ENCODE measurements at regions of chr12 and their contacts with region 1.

Region 1: DNA sequence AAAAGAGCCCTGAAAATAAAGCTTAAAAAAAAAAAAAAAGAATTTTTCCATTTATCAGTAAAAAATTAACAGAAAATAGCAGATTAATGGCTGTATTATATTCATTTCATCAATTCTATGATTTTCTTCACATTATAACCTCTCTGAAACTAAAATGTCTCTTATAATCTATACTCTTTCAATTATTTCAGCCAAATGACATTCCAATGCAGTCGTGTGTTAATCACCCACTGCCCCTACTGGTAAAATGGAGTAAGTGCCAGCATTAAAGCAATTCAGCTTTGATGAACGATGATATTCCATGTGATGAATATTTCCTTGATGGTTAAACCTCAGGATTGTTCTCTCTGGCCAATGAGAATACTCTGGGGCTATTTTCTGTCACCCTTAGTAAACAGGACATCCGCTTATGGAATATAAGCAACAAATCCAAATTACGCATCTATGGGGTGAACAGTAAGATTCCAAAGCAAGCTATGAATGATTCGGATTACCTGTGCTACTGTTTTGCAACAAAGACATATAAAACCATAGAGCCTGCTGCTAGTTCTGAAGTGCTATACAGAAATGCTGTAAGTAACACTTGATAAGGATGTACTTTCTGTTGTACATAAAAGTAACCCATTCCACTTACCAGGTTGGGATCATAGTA is 20.3 kb upstream of the SYCP3 start:
- DNase-seq: no peak
- ATAC-seq: peak; percentile 80
- H3K4me3 ChIP-seq: no peak overlapping the region
- H3K27ac ChIP-seq: no peak overlapping the region
- H3K4me1 ChIP-seq: no peaks in the 10 kb centered on the region
- H3K27me3 ChIP-seq: no peaks in the 10 kb centered on the region
- CTCF ChIP-seq: peak; percentile 68 to 83 (median 76)
- EP300 ChIP-seq: no peak
- POLR2A ChIP-seq: no peak
- RAD21 ChIP-seq: peak; percentile 87

Region 2: DNA sequence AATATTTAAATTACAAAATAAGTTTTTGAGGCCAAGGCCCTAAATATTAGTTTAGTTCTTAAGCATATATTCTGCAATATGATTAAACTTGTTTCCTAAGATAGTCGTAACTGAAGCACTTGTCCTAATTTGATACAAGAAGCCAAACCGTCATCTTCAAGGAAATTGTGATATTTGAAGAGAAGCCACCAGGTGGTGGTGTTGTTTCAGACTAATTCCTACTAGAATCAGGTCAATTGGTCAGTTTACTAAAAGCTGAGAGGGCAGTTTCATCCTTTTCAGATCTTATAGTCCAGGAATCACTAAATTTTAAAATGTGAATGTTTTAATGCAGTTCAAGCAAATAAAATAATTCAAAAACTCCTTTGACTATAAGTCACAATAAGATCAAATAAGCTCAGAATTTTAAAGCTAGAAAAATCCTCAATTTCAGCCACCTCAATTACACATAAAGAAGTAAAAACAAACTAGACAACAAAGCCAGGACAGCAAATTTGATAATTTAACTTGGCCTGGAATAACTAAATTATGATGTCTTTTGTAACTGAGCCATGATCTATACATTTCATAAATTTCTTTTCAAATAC is 344.9 kb before region 1 on chr12:
- CTCF ChIA-PET with region 1: interaction called, 17 read pairs
- POLR2A ChIA-PET with region 1: no interaction called
- RAD21 ChIA-PET with region 1: interaction called, 10 read pairs
- SMC1A ChIA-PET with region 1: interaction called, 12 read pairs
- in situ Hi-C with region 1: loop called (anchors 5 kb)
- intact Hi-C with region 1: loop called (anchors 2 kb)
- DNase-seq: peak; percentile 13
- ATAC-seq: peak; percentile 81
- H3K4me3 ChIP-seq: no peak overlapping the region
- H3K27ac ChIP-seq: no peak overlapping the region
- H3K4me1 ChIP-seq: no peaks in the 10 kb centered on the region
- H3K27me3 ChIP-seq: no peaks in the 10 kb centered on the region
- CTCF ChIP-seq: peak; percentile 48 to 66 (median 51); a peak in 5 of 6 replicates
- EP300 ChIP-seq: no peak
- POLR2A ChIP-seq: no peak
- RAD21 ChIP-seq: peak; percentile 87

Region 3: DNA sequence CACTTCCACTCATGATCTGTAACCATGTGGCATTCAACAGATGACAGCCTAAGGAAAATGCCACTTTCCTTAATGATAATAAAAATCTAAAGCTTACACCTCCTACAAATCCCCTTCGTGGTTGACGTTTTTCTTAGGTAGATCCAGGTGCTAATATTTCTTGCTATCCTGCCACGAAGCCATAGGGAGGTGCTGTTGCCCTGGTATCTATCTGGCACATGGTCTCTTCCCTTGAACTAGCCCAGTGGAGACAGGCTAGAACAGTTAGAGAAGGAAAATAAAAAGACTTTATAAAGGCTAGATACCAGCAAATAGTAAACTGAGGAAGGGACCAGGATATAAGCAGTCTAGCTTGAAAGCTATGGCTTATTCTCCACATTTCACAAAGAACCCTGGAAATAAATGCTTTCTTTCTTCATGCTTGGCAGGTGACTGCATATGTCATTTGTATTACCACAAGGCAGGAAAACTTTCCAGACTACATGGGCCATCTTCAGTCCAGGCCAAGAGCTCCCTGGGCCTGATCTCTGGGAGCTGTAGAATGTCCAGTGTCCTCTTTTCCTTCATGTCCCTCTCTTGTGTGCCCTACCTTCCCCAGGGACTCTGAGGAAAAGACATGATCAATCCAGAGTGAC is 269.1 kb before region 1 on chr12:
- CTCF ChIA-PET with region 1: interaction called, 7 read pairs
- POLR2A ChIA-PET with region 1: no interaction called
- RAD21 ChIA-PET with region 1: no interaction called
- SMC1A ChIA-PET with region 1: interaction called, 4 read pairs
- in situ Hi-C with region 1: no loop called
- intact Hi-C with region 1: loop called (anchors 5 kb)
- DNase-seq: no peak
- ATAC-seq: peak; percentile 84
- H3K4me3 ChIP-seq: no peak overlapping the region
- H3K27ac ChIP-seq: no peak overlapping the region
- H3K4me1 ChIP-seq: no peaks in the 10 kb centered on the region
- H3K27me3 ChIP-seq: no peaks in the 10 kb centered on the region
- CTCF ChIP-seq: peak; percentile 44 to 52 (median 51)
- EP300 ChIP-seq: no peak
- POLR2A ChIP-seq: no peak
- RAD21 ChIP-seq: peak; percentile 74

Region 4: GRCh38 chr12:101570047-101570446 is 189.5 kb before region 1 on chr12:
- CTCF ChIA-PET with region 1: interaction called, 4 read pairs
- POLR2A ChIA-PET with region 1: interaction called, 3 read pairs
- RAD21 ChIA-PET with region 1: interaction called, 6 read pairs
- SMC1A ChIA-PET with region 1: no interaction called
- in situ Hi-C with region 1: no loop called
- intact Hi-C with region 1: loop called (anchors 1 kb)
- DNase-seq: no peak
- ATAC-seq: peak; percentile 38; the same call in 1 of the 3 replicates
- H3K4me3 ChIP-seq: no peak overlapping the region
- H3K27ac ChIP-seq: no peak overlapping the region
- H3K4me1 ChIP-seq: no peaks in the 10 kb centered on the region
- H3K27me3 ChIP-seq: peaks cover 0 to 4% of the 10 kb centered on the region in 2 experiments; a peak in 1 of 4 replicates
- CTCF ChIP-seq: peak in 1 of 3 experiments; percentile 40; a peak in 3 of 6 replicates
- EP300 ChIP-seq: no peak
- POLR2A ChIP-seq: no peak
- RAD21 ChIP-seq: peak; percentile 31; the same call in 1 of the 2 replicates

Region 5: GRCh38 chr12:101747697-101748096 is 11.8 kb before region 1 on chr12:
- CTCF ChIA-PET with region 1: interaction called, 16 read pairs
- POLR2A ChIA-PET with region 1: no interaction called
- RAD21 ChIA-PET with region 1: interaction called, 5 read pairs
- SMC1A ChIA-PET with region 1: interaction called, 10 read pairs
- in situ Hi-C with region 1: no loop called
- intact Hi-C with region 1: no loop called
- DNase-seq: no peak
- ATAC-seq: no peak
- H3K4me3 ChIP-seq: no peak overlapping the region
- H3K27ac ChIP-seq: no peak overlapping the region
- H3K4me1 ChIP-seq: peaks cover 17% of the 10 kb centered on the region
- H3K27me3 ChIP-seq: no peaks in the 10 kb centered on the region
- CTCF ChIP-seq: no peak
- EP300 ChIP-seq: no peak
- POLR2A ChIP-seq: no peak
- RAD21 ChIP-seq: no peak